ENCODE measurements at regions of chr9 and their contacts with region 1.

Region 1: DNA sequence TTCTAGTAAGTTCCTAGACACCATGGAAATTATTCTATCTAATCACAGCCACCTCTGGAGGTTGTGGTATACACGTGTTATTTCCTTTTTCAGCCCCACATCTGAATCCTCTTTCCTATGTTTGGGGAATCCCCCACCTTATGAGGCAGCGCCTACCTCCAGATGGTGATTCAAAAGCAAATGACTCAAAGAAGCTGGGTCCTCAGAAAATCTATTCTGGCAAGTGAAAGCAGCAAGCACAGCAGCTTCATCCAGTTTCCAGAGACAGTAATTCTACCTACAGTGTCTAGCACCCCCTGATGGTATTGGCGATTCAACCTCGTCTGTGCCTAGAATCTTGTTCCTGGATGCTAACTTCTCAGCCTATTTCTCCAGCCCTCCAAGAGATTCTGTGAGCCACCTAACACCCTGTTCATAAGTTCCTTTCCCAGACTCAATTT is 43.0 kb downstream of the STRBP start:
- DNase-seq: peak; percentile 78
- H3K4me3 Mint-ChIP-seq: no peak overlapping the region
- H3K27ac Mint-ChIP-seq: peak overlapping the region; percentile 80
- H3K4me1 Mint-ChIP-seq: peaks cover 28% of the 10 kb centered on the region
- H3K27me3 Mint-ChIP-seq: no peaks in the 10 kb centered on the region

Region 2: DNA sequence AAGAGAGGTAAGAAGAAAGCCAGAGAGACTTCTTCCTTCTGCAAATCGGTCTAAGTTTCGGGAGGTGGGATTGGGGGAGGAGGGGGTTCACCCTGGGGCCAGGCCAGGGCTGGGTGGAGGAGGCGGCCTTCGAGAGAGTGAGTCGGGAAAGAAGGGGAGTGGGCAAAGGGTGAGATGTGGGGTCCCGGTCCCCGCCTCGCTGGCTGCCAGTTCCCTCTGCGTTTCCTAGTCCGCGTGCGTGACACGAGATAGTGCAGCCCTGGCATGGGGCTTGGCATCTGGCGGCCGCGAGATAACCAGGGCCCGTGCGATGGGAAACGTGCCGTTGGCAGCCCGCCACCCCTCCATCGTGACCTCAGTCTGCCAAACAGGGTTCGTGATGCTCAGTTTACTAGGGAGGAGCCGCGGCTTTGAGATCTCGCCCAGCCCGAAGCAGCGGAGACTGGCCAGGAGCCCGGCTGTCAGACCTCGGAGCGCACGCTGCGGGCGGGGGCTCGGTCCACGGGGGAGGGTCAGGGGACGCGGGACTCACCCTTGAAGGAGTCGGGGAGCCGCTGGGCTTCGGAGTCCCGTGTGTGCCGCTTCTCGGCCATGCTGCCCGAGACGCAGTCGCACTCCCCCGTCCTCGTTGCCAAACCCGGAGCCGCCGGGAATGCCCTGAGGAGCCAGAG is 1855.7 kb before region 1 on chr9 and contains the start of gene STOM:
- CTCF ChIA-PET with region 1: no interaction called
- POLR2A ChIA-PET with region 1: no interaction called
- intact Hi-C with region 1: loop called (anchors 10 kb)
- DNase-seq: peak; percentile 79
- H3K4me3 Mint-ChIP-seq: peak within 1 kb of the TSS; percentile 93
- H3K27ac Mint-ChIP-seq: peak within 1 kb of the TSS; percentile 99
- H3K4me1 Mint-ChIP-seq: peaks cover 58% of the 10 kb centered on the region
- H3K27me3 Mint-ChIP-seq: no peaks in the 10 kb centered on the region
- total RNA-seq, gene STOM: 49.8 to 51.9 TPM

Region 3: DNA sequence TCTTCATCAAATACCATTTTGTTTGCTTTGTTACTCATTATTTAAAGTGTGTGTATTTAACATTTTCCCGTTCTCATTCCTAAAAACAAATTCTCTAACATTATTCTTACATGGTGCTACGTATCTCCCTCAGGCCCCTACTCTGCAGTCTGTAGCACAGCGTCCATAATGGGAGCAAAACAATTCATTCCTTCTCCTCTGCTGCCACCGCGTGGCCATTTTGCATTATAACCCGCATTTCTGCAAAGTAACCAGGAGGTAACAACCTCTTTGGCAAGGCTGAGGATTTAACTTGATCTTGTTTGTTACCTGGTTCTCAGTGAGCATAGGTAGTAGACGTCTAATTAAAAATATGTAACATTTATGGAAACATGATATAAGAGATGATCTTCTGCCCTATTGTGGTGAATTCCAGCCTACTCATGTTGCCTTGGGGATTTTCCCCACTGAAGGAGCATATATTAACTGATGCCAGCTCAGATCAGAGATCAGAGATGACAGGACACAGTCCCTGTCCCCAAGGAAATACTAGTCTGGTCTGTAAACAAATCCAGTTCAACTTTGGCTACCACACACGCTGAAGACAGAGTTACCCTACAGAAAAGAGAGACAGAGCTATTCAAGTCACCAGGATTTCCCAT is 415.0 kb before region 1 on chr9:
- CTCF ChIA-PET with region 1: no interaction called
- POLR2A ChIA-PET with region 1: no interaction called
- intact Hi-C with region 1: loop called (anchors 1 kb)
- DNase-seq: peak; percentile 85
- H3K4me3 Mint-ChIP-seq: no peak overlapping the region
- H3K27ac Mint-ChIP-seq: no peak overlapping the region
- H3K4me1 Mint-ChIP-seq: peaks cover 29% of the 10 kb centered on the region
- H3K27me3 Mint-ChIP-seq: no peaks in the 10 kb centered on the region

Region 4: GRCh38 chr9:122904823-122905710 is 320.3 kb before region 1 on chr9 and contains the start of gene RC3H2:
- CTCF ChIA-PET with region 1: no interaction called
- POLR2A ChIA-PET with region 1: no interaction called
- intact Hi-C with region 1: loop called (anchors 5 kb)
- DNase-seq: peak; percentile 98
- H3K4me3 Mint-ChIP-seq: peak within 1 kb of the TSS; percentile 94
- H3K27ac Mint-ChIP-seq: peak within 1 kb of the TSS; percentile 93
- H3K4me1 Mint-ChIP-seq: peaks cover 20% of the 10 kb centered on the region
- H3K27me3 Mint-ChIP-seq: no peaks in the 10 kb centered on the region
- total RNA-seq, gene RC3H2: 27.7 to 27.8 TPM

Region 5: GRCh38 chr9:122991370-122991830 is 234.0 kb before region 1 on chr9:
- CTCF ChIA-PET with region 1: no interaction called
- POLR2A ChIA-PET with region 1: no interaction called
- intact Hi-C with region 1: loop called (anchors 1 kb)
- DNase-seq: peak; percentile 62
- H3K4me3 Mint-ChIP-seq: no peak overlapping the region
- H3K27ac Mint-ChIP-seq: no peak overlapping the region
- H3K4me1 Mint-ChIP-seq: peaks cover 8% of the 10 kb centered on the region
- H3K27me3 Mint-ChIP-seq: no peaks in the 10 kb centered on the region

Region 6: GRCh38 chr9:123235448-123235847 is 10.1 kb after region 1 on chr9:
- CTCF ChIA-PET with region 1: interaction called, 13 read pairs
- POLR2A ChIA-PET with region 1: no interaction called
- intact Hi-C with region 1: no loop called
- DNase-seq: no peak
- H3K4me3 Mint-ChIP-seq: no peak overlapping the region
- H3K27ac Mint-ChIP-seq: no peak overlapping the region
- H3K4me1 Mint-ChIP-seq: peaks cover 10% of the 10 kb centered on the region
- H3K27me3 Mint-ChIP-seq: no peaks in the 10 kb centered on the region

Region 7: DNA sequence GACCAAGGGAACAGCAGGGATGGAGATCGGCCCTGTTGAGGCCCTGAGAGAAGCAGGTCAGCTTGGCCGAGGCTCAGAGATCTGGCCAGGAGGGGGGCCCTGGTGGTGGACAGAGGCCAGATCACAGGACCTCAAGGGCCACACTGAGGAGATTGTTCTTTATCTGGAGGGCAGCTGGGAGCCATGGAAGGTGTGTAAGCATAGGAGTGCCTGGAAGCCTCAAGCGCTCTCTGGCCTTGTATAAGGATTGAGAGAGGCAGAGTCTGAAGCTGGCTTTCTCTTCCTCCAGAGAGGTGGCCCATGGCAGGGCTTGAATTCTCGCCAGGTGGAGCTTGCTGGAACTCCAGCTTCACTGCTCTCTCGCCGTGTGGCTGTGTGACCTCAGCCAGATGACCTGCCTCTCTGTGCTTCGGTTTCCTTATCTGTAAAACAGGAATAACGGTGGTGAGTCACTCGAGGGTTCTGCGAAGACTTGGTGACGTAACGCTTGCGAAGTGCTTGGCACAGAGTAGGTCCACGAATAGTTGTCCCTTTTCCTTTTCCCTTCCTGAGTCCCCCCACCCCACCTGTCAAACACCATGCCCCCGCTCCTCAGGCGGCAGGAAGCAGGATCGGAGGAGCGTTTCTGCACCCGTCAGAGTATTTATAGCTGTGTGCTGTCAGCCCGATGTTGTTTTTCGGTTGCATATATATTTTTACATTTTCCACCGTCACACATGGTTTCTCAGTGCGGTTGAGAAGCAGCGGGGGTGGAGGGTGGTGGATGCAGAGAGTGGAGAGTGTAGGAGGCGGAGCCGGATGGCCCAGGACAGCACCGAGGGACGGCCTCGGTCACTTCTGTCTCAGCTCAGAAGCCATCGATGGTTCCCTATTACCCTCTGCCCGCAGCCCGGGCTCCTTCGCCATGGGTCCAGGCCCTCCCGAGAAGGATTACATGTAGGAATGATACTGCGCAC is 113.6 kb after region 1 on chr9:
- CTCF ChIA-PET with region 1: interaction called, 20 read pairs
- POLR2A ChIA-PET with region 1: interaction called, 13 read pairs
- intact Hi-C with region 1: loop called (anchors 1 kb)
- DNase-seq: peak; percentile 88
- H3K4me3 Mint-ChIP-seq: peak overlapping the region; percentile 80
- H3K27ac Mint-ChIP-seq: peak overlapping the region; percentile 95
- H3K4me1 Mint-ChIP-seq: peaks cover 34% of the 10 kb centered on the region
- H3K27me3 Mint-ChIP-seq: no peaks in the 10 kb centered on the region

Measured in activated CD4-positive, alpha-beta memory T cell treated with anti-CD3 and anti-CD28 coated beads for 36 hours (primary cell).